Activated CD4-positive, alpha-beta memory T cell treated with anti-CD3 and anti-CD28 coated beads for 36 hours (primary cell): ENCODE measurements at regions of chr6 and their contacts with region 1.

Region 1: GRCh38 chr6:15389765-15390723 is 144.2 kb downstream of the JARID2 start:
- DNase-seq: no peak
- H3K4me3 Mint-ChIP-seq: no peak overlapping the region
- H3K27ac Mint-ChIP-seq: no peak overlapping the region
- H3K4me1 Mint-ChIP-seq: peaks cover 81% of the 10 kb centered on the region
- H3K27me3 Mint-ChIP-seq: no peaks in the 10 kb centered on the region

Region 2: DNA sequence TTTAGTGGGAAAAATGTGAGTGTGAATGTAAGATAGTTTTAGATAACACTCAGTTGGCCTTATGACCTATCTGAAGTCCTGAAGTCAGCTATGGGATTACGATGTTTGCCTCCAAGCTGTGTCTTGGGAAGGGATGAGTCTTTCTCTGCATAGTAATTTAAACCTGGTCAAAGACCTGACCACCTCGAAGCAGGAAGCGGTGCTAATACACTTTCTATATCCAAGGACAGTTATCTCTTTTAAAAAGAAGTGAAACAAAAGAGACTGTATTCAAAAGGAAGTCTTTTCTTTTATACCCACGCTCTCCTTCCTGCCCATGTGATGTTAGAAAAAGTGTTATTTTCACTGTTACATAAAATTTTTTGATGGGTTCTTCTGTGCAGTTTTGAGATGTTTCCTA is 49.3 kb before region 1 on chr6:
- CTCF ChIA-PET with region 1: no interaction called
- POLR2A ChIA-PET with region 1: no interaction called
- intact Hi-C with region 1: loop called (anchors 5 kb)
- DNase-seq: no peak
- H3K4me3 Mint-ChIP-seq: no peak overlapping the region
- H3K27ac Mint-ChIP-seq: peak overlapping the region; percentile 32
- H3K4me1 Mint-ChIP-seq: peaks cover 76% of the 10 kb centered on the region
- H3K27me3 Mint-ChIP-seq: no peaks in the 10 kb centered on the region